ENCODE measurements at regions of chrX and their contacts with region 1.

Region 1: GRCh38 chrX:46704767-46705386 is 54.0 kb downstream of the SLC9A7 start:
- DNase-seq: peak; percentile 83
- ATAC-seq: peak; percentile 96
- H3K4me3 ChIP-seq: 0 out of 2 replicates have a peak overlapping the region, but pooled peaks have one; percentile 4
- H3K27ac ChIP-seq: peak overlapping the region; percentile 92
- H3K4me1 ChIP-seq: peaks cover 51% of the 10 kb centered on the region
- H3K27me3 ChIP-seq: no peaks in the 10 kb centered on the region
- CTCF ChIP-seq: no peak
- EP300 ChIP-seq: peak; percentile 83 to 97; a peak in 3 of 4 replicates
- POLR2A ChIP-seq: peak; percentile 44; the same call in 1 of the 2 replicates
- RAD21 ChIP-seq: 0 out of 2 replicates have a peak, but pooled peaks have one; percentile 5

Region 2: DNA sequence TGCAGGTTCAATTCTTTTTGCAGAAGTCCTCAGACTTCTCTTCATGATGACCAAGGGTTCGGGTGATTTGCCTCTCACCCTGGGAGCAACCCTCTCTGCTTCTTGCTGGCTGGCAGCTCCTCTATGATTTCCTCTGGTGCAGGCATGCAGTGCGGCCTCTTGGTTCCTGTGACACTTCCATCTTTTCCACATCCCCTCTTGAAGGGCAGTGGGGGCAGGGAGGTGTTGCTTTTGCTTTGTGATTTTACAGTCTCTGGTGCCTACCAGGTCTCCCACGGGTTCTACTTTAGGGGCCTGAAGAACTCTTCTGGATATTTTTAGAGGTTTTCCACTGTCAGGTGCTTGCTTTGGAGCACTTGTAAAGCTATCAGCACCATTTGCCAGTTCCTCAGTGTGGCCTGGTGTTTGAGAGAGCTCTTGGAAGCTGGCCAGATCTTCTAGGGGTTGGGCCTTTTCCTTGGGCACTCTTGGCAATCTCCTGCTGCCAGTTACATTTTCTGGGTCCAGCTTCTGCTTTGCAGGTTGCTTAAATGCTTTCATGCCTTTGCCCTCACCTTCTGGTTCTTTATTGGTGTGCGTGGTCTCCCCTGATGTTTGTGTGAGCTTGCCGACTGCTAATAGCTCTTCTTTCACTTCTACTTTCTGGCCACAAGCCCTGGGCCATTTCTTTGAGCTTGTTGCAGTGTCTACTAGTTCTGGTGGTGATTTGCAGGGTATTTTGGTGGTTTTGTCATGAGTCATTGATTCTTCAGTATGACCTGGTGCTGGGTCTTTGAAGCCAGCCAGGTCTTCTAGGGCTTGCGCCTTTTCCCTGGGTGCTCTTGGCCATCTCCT is 142.8 kb before region 1 on chrX:
- CTCF ChIA-PET with region 1: no interaction called
- POLR2A ChIA-PET with region 1: no interaction called
- RAD21 ChIA-PET with region 1: interaction called, 4 read pairs
- SMC1A ChIA-PET with region 1: interaction called, 10 read pairs
- in situ Hi-C with region 1: no loop called
- intact Hi-C with region 1: no loop called
- DNase-seq: peak; percentile 95
- ATAC-seq: peak; percentile 99
- H3K4me3 ChIP-seq: peak overlapping the region; percentile 4; the same call in 1 of the 2 replicates
- H3K27ac ChIP-seq: peak overlapping the region; percentile 62
- H3K4me1 ChIP-seq: peaks cover 20% of the 10 kb centered on the region
- H3K27me3 ChIP-seq: no peaks in the 10 kb centered on the region
- CTCF ChIP-seq: no peak
- EP300 ChIP-seq: peak; percentile 70 to 94
- POLR2A ChIP-seq: no peak
- RAD21 ChIP-seq: 0 out of 2 replicates have a peak, but pooled peaks have one; percentile 6

Region 3: DNA sequence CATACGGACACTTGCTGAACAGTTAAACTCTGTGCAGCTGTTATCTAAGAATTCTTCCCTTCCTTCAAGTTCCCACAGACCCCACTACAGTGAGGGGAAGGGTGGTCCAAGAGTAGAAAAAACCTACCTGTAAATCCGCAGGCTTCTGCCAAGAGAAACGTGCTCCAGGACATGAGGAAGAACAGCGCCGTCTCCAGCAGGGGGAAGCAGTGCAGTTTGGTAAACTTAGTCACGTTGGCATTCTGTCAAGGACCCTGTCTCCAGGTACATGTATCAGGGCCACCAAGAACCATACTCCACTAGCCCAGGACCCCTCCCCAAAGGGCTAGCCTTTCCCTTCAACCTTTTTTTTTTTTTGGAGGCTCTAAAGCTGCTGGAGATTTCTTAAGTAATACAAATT is 51.4 kb before region 1 on chrX:
- CTCF ChIA-PET with region 1: interaction called, 3 read pairs
- POLR2A ChIA-PET with region 1: no interaction called
- RAD21 ChIA-PET with region 1: interaction called, 5 read pairs
- SMC1A ChIA-PET with region 1: interaction called, 4 read pairs
- in situ Hi-C with region 1: no loop called
- intact Hi-C with region 1: loop called (anchors 2 kb)
- DNase-seq: no peak
- ATAC-seq: peak; percentile 67
- H3K4me3 ChIP-seq: no peak overlapping the region
- H3K27ac ChIP-seq: peak overlapping the region; percentile 62
- H3K4me1 ChIP-seq: peaks cover 16% of the 10 kb centered on the region
- H3K27me3 ChIP-seq: no peaks in the 10 kb centered on the region
- CTCF ChIP-seq: peak; percentile 46 to 52 (median 48); a peak in 5 of 6 replicates
- EP300 ChIP-seq: no peak
- POLR2A ChIP-seq: no peak
- RAD21 ChIP-seq: peak; percentile 55

Region 4: GRCh38 chrX:46693149-46693548 is 11.7 kb before region 1 on chrX:
- CTCF ChIA-PET with region 1: interaction called, 38 read pairs
- POLR2A ChIA-PET with region 1: interaction called, 10 read pairs
- RAD21 ChIA-PET with region 1: interaction called, 30 read pairs
- SMC1A ChIA-PET with region 1: interaction called, 107 read pairs
- in situ Hi-C with region 1: no loop called
- intact Hi-C with region 1: no loop called
- DNase-seq: peak; percentile 62
- ATAC-seq: peak; percentile 92
- H3K4me3 ChIP-seq: no peak overlapping the region
- H3K27ac ChIP-seq: peak overlapping the region; percentile 30; the same call in 1 of the 2 replicates
- H3K4me1 ChIP-seq: peaks cover 23% of the 10 kb centered on the region
- H3K27me3 ChIP-seq: no peaks in the 10 kb centered on the region
- CTCF ChIP-seq: no peak
- EP300 ChIP-seq: peak; percentile 10 to 71; a peak in 3 of 4 replicates
- POLR2A ChIP-seq: no peak
- RAD21 ChIP-seq: no peak

Region 5: GRCh38 chrX:46722742-46723568 is 18.1 kb after region 1 on chrX:
- CTCF ChIA-PET with region 1: interaction called, 6 read pairs
- POLR2A ChIA-PET with region 1: interaction called, 3 read pairs
- RAD21 ChIA-PET with region 1: no interaction called
- SMC1A ChIA-PET with region 1: interaction called, 31 read pairs
- in situ Hi-C with region 1: no loop called
- intact Hi-C with region 1: no loop called
- DNase-seq: no peak
- ATAC-seq: peak; percentile 64
- H3K4me3 ChIP-seq: peak overlapping the region; percentile 48; the same call in 1 of the 2 replicates
- H3K27ac ChIP-seq: peak overlapping the region; percentile 53
- H3K4me1 ChIP-seq: peaks cover 11% of the 10 kb centered on the region
- H3K27me3 ChIP-seq: no peaks in the 10 kb centered on the region
- CTCF ChIP-seq: no peak
- EP300 ChIP-seq: no peak
- POLR2A ChIP-seq: no peak
- RAD21 ChIP-seq: no peak

Region 6: DNA sequence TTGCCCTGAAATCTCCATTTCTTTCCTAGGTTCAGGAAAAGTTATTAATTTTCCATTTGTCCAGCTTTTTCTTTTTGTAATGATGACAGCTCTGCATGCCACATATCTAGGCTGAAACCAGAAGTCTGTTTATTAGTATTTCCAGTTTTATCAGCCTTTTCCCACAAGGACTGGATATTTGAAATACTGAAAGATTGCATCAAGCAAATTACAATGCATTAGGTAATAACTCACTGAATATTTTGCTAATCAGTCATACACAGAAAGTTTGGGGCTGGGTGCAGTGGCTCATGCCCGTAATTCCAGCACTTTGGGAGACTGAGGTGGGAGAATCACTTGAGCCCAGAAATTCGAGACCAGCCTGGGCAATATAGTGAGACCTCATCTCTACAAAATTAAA is 32.6 kb after region 1 on chrX:
- CTCF ChIA-PET with region 1: no interaction called
- POLR2A ChIA-PET with region 1: no interaction called
- RAD21 ChIA-PET with region 1: no interaction called
- SMC1A ChIA-PET with region 1: no interaction called
- in situ Hi-C with region 1: no loop called
- intact Hi-C with region 1: no loop called
- DNase-seq: no peak
- ATAC-seq: no peak
- H3K4me3 ChIP-seq: no peak overlapping the region
- H3K27ac ChIP-seq: no peak overlapping the region
- H3K4me1 ChIP-seq: no peaks in the 10 kb centered on the region
- H3K27me3 ChIP-seq: no peaks in the 10 kb centered on the region
- CTCF ChIP-seq: no peak
- EP300 ChIP-seq: no peak
- POLR2A ChIP-seq: no peak
- RAD21 ChIP-seq: no peak

Region 7: GRCh38 chrX:46873746-46874145 is 168.9 kb after region 1 on chrX:
- CTCF ChIA-PET with region 1: no interaction called
- POLR2A ChIA-PET with region 1: no interaction called
- RAD21 ChIA-PET with region 1: no interaction called
- SMC1A ChIA-PET with region 1: no interaction called
- in situ Hi-C with region 1: no loop called
- intact Hi-C with region 1: no loop called
- DNase-seq: no peak
- ATAC-seq: no peak
- H3K4me3 ChIP-seq: no peak overlapping the region
- H3K27ac ChIP-seq: no peak overlapping the region
- H3K4me1 ChIP-seq: no peaks in the 10 kb centered on the region
- H3K27me3 ChIP-seq: no peaks in the 10 kb centered on the region
- CTCF ChIP-seq: no peak
- EP300 ChIP-seq: no peak
- POLR2A ChIP-seq: no peak
- RAD21 ChIP-seq: no peak

Measured in GM12878 (cell line).